Gastrocnemius medialis (tissue), 4 donors: ENCODE measurements at regions of chr6 and their contacts with region 1.

Region 1: GRCh38 chr6:85593438-85594196 is at the start of gene SNX14:
- DNase-seq: peak; percentile 92 to 93
- ATAC-seq: peak; percentile 92 to 95
- H3K4me3 ChIP-seq: peak within 1 kb of the TSS; percentile 80 to 97 (median 84)
- H3K27ac ChIP-seq: peak within 1 kb of the TSS; percentile 93 to 95 (median 94)
- H3K4me1 ChIP-seq: peaks cover 18 to 28% of the 10 kb centered on the region in 2 donors
- H3K27me3 ChIP-seq: no peaks in the 10 kb centered on the region
- CTCF ChIP-seq: peak in 3 of 5 experiments; percentile 17 to 38 (median 23)
- POLR2A ChIP-seq: peak; percentile 79 to 82
- total RNA-seq, gene SNX14: 16.0 to 38.5 (median 24.7) TPM

Region 2: DNA sequence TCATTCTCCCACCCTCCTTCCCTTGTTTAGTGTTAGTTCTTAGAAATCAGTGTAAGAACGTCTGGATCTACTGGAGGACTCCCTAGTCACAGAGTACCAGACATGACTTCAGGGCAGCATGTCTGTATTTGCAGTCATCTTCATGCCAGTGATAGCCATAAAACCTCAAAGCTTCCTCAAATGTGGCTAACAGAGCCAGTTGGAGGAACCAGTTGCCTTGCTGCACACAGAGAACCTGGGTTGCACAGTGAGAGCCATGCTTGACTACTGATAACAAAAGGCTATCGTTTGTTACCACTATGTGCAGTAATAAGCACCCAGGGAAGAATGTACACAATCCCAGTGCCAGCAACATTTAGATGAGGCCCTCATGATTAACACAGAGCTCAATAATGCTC is 123.6 kb before region 1 on chr6:
- in situ Hi-C with region 1: no loop called
- intact Hi-C with region 1: no loop called
- DNase-seq: no peak
- ATAC-seq: no peak
- H3K4me3 ChIP-seq: no peak overlapping the region
- H3K27ac ChIP-seq: no peak overlapping the region
- H3K4me1 ChIP-seq: no peaks in the 10 kb centered on the region
- H3K27me3 ChIP-seq: no peaks in the 10 kb centered on the region
- CTCF ChIP-seq: no peak
- POLR2A ChIP-seq: no peak

Region 3: DNA sequence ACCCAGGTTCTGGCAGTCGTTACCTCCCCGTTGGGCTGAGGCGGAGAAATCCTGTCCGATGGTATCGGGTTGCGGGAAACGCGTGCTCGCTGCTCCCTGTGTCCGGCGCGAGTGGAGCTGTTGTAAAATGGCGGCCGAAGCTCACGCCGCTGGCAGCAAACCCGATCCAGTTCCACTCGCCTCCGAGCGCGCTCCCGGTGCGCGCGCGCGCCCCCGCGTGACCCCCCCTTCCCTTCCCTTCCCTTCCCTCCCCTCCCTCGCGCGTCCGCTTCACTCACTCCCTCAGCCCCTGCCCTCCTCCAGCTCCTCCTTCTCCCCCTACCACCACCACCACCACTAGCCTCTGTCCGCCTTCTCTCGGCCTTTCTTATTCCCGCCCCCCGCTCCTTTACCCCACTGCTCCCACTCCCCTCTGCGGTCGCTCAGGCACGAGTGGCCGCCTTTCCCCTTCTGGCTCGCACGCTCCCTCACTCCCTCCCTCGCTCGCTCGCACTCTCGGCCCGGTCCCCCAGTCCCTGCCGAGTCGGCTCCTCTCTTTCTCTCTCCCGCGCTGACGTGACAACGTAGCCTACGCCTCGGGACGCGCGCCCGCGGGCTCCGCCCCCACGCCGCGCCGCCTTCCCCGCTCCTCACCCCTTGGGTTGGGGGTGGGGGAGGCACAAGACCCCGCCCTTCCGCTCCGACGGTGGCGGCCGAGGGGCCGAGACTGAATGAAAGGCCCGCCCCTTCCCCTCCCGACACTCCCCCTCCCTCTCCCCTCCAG is 49.3 kb after region 1 on chr6 and contains the start of gene SYNCRIP:
- in situ Hi-C with region 1: loop called in 1 of 4 experiments (anchors 5 kb)
- intact Hi-C with region 1: loop called (anchors 1 kb)
- DNase-seq: peak; percentile 99
- ATAC-seq: peak; percentile 67 to 70
- H3K4me3 ChIP-seq: peak within 1 kb of the TSS; percentile 93 to 100 (median 98)
- H3K27ac ChIP-seq: peak within 1 kb of the TSS; percentile 96 to 98 (median 98)
- H3K4me1 ChIP-seq: peaks cover 36 to 42% of the 10 kb centered on the region in 2 donors
- H3K27me3 ChIP-seq: no peaks in the 10 kb centered on the region
- CTCF ChIP-seq: no peak
- POLR2A ChIP-seq: peak; percentile 90 to 93
- total RNA-seq, gene SYNCRIP: 43.0 to 59.3 (median 54.5) TPM

Region 4: GRCh38 chr6:85923013-85923430 is 329.4 kb after region 1 on chr6:
- in situ Hi-C with region 1: no loop called
- intact Hi-C with region 1: no loop called
- DNase-seq: no peak
- ATAC-seq: peak; percentile 49 to 65
- H3K4me3 ChIP-seq: no peak overlapping the region
- H3K27ac ChIP-seq: no peak overlapping the region
- H3K4me1 ChIP-seq: no peaks in the 10 kb centered on the region
- H3K27me3 ChIP-seq: no peaks in the 10 kb centered on the region
- CTCF ChIP-seq: peak in 3 of 5 experiments; percentile 28 to 51 (median 46)
- POLR2A ChIP-seq: no peak